Activated CD4-positive, alpha-beta T cell treated with anti-CD3 and anti-CD28 coated beads for 36 hours (primary cell): ENCODE measurements at regions of chr14 and their contacts with region 1.

Region 1: DNA sequence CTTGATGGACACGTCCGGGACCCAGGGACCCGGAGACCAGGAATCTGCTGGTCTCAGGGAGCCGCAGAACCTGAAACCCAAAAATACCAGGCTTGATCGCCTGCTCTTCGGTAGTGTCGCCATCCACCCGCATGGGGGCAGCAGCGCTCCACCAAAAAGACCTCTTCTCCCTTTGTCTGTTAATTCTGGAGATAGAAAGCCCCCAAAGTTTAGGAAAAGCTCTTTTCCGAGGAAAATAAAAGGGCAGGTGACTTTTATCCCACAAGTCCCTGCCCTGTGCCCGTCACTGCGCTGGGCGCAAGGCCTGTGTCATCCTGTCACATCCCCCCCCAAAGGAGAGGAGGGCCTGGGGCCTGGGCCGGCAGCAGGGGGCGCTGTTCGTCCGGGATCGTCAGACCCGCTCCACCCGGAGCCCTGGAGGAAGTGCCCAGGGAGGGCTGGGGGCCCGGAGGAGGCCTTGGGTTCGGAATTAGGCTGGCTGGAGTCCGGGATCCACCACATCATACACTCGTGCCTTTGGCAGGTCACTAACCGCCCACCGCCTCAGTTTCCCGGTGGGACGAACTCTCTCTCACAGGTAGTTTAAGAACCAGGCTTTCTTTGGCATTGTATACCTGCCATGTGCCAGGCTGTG is 31.9 kb downstream of the DAD1 start:
- DNase-seq: peak; percentile 96
- ATAC-seq: peak; percentile 10
- H3K4me3 Mint-ChIP-seq: peak overlapping the region; percentile 76
- H3K27ac Mint-ChIP-seq: peak overlapping the region; percentile 100
- H3K4me1 Mint-ChIP-seq: peaks cover 86% of the 10 kb centered on the region
- H3K27me3 Mint-ChIP-seq: no peaks in the 10 kb centered on the region

Region 2: DNA sequence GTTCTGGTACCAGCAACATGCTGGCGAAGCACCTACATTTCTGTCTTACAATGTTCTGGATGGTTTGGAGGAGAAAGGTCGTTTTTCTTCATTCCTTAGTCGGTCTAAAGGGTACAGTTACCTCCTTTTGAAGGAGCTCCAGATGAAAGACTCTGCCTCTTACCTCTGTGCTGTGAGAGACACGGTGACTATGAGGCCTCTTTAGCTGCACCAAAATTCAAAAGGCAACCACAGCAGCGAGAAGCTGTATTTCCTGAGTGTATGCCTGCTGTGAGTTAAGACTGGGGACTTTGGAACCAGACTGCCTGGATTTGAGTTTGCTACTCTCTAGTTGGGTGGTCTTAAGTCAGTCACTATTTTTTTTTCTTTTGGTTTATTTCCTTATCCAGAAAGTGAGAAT is 913.7 kb before region 1 on chr14:
- CTCF ChIA-PET with region 1: no interaction called
- POLR2A ChIA-PET with region 1: no interaction called
- intact Hi-C with region 1: loop called (anchors 5 kb)
- DNase-seq: no peak
- ATAC-seq: no peak
- H3K4me3 Mint-ChIP-seq: peak overlapping the region; percentile 48
- H3K27ac Mint-ChIP-seq: no peak overlapping the region
- H3K4me1 Mint-ChIP-seq: peaks cover 2% of the 10 kb centered on the region
- H3K27me3 Mint-ChIP-seq: peaks cover 4% of the 10 kb centered on the region

Region 3: GRCh38 chr14:21917699-21918436 is 639.2 kb before region 1 on chr14:
- CTCF ChIA-PET with region 1: interaction called, 15 read pairs
- POLR2A ChIA-PET with region 1: interaction called, 6 read pairs
- intact Hi-C with region 1: loop called (anchors 1 to 5 kb)
- DNase-seq: peak; percentile 74
- ATAC-seq: peak; percentile 57
- H3K4me3 Mint-ChIP-seq: peak overlapping the region; percentile 65
- H3K27ac Mint-ChIP-seq: peak overlapping the region; percentile 69
- H3K4me1 Mint-ChIP-seq: peaks cover 57% of the 10 kb centered on the region
- H3K27me3 Mint-ChIP-seq: no peaks in the 10 kb centered on the region

Region 4: GRCh38 chr14:22200977-22201605 is 356.0 kb before region 1 on chr14:
- CTCF ChIA-PET with region 1: interaction called, 5 read pairs
- POLR2A ChIA-PET with region 1: no interaction called
- intact Hi-C with region 1: loop called in 1 of 2 experiments (anchors 5 kb)
- DNase-seq: no peak
- ATAC-seq: peak; percentile 73
- H3K4me3 Mint-ChIP-seq: no peak overlapping the region
- H3K27ac Mint-ChIP-seq: no peak overlapping the region
- H3K4me1 Mint-ChIP-seq: peaks cover 15% of the 10 kb centered on the region
- H3K27me3 Mint-ChIP-seq: no peaks in the 10 kb centered on the region

Region 5: GRCh38 chr14:22519877-22520685 is 37.0 kb before region 1 on chr14:
- CTCF ChIA-PET with region 1: interaction called, 15 read pairs
- POLR2A ChIA-PET with region 1: interaction called, 6 read pairs
- intact Hi-C with region 1: loop called in 1 of 2 experiments (anchors 5 kb)
- DNase-seq: no peak
- ATAC-seq: peak; percentile 14
- H3K4me3 Mint-ChIP-seq: peak overlapping the region; percentile 84
- H3K27ac Mint-ChIP-seq: peak overlapping the region; percentile 97
- H3K4me1 Mint-ChIP-seq: peaks cover 87% of the 10 kb centered on the region
- H3K27me3 Mint-ChIP-seq: no peaks in the 10 kb centered on the region

Region 6: DNA sequence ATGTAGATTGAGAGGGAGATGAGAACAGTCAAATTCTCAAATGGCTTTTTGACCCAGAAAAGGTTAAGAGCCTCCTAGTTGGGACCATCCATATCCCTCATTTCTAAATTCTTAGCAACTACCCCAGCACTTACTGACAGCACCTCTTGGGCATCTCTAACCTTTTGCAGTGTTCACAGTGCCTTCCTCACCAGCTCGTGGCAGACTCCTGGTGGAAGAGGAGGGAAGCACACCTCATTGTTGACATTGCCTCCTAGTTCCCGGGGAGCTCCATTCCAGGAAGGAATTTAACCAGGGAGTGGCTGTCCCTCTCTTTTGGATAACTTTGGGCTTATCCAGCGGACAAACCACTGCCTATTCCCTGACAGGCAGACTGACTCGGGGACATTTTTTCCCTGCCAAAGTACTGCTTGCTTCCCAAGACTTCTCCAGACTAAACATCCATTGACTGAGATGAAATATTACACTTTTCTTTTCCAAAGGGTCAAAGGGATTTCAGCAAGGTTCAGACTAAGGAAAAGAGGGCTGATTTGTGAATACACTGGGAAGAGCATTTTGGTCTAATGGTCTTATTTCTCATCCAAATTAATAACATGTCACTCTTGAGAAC is 96.0 kb after region 1 on chr14:
- CTCF ChIA-PET with region 1: interaction called, 12 read pairs
- POLR2A ChIA-PET with region 1: no interaction called
- intact Hi-C with region 1: loop called (anchors 1 kb)
- DNase-seq: peak; percentile 75
- ATAC-seq: peak; percentile 80
- H3K4me3 Mint-ChIP-seq: no peak overlapping the region
- H3K27ac Mint-ChIP-seq: no peak overlapping the region
- H3K4me1 Mint-ChIP-seq: no peaks in the 10 kb centered on the region
- H3K27me3 Mint-ChIP-seq: no peaks in the 10 kb centered on the region

Region 7: GRCh38 chr14:22852940-22853767 is 296.0 kb after region 1 on chr14:
- CTCF ChIA-PET with region 1: interaction called, 6 read pairs
- POLR2A ChIA-PET with region 1: no interaction called
- intact Hi-C with region 1: loop called (anchors 1 kb)
- DNase-seq: peak; percentile 94
- ATAC-seq: peak; percentile 82
- H3K4me3 Mint-ChIP-seq: peak overlapping the region; percentile 69
- H3K27ac Mint-ChIP-seq: peak overlapping the region; percentile 81
- H3K4me1 Mint-ChIP-seq: peaks cover 26% of the 10 kb centered on the region
- H3K27me3 Mint-ChIP-seq: peaks cover 7% of the 10 kb centered on the region